ENCODE measurements at regions of chr2 and their contacts with region 1.

Region 1: DNA sequence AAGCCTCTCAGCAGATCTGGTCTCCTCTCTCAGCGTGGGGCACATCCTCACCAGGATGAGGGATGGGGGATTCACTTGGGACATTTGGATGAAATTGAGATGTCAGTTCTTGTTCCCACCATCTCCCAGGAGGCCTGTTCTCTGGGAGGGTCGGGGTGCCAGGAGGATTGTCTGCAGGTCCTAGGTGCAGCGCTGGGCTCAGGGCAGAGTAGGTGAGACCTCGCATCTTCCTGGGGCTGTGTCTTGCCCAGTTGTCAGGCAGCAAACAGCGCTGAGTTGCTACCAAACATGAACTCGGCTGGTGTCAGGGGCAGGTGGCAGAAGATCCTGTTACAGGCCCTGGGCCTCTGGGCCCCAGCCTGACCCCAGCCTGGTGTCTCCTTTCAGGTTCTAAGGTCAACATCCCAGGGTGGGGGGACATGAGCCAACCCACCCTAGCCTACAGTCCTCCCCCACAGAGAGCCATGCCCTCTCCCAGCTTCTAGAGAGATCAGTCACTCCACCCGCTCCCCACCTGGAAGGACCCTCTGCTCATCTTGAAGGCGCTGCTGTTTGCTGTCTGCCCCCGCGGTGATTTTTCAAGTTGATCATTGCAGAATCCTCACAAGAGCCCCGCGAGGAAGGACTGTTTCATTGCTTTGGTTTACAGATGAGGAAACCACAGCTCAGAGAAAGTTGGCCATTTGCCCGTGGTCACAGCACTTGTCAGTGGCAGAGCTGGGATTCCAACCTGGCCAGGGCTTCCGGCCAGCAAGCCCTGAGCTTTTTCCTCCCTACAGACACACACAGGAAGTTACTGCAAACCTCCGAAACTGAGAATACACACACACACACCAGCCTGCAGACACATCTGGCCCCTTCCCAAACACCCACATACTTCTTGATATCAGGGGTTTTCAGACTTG is 83.9 kb downstream of the STPG4 start:
- DNase-seq: peak; percentile 93

Region 2: GRCh38 chr2:46632349-46632748 is 438.8 kb before region 1 on chr2:
- intact Hi-C with region 1: loop called in 1 of 2 experiments (anchors 10 kb)
- DNase-seq: no peak

Region 3: DNA sequence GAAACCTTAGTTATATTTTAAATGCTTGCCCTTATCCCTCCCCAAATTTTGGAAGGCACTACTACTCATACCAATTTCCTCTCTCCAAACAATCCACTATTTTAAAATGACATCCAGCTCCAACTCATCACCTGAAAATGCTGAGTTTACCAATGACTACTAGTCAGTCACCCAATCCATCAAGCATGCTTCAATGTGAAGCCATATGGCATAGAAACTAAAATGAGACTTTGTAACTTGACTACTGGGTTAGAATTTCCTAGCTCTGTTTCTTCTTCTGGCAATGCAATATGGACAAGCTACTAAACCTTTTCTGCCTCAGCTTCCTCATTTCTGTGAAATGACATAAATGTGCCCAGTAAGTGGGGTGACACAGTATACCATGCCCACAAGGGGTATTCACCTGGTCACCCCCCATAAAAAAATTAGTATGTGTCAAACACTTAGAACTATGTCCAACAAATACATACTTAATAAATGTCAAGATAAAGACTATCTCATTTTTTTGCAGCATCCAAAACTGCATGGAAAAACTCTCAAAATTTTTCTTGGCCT is 93.9 kb after region 1 on chr2:
- intact Hi-C with region 1: loop called in 1 of 2 experiments (anchors 10 kb)
- DNase-seq: no peak

Measured in posterior vena cava (tissue), 2 donors.